ENCODE measurements at regions of chr11 and their contacts with region 1.

Region 1: GRCh38 chr11:33399421-33399820 is 142.2 kb downstream of the HIPK3 start:
- DNase-seq: no peak
- H3K4me3 ChIP-seq: no peak overlapping the region
- H3K27ac ChIP-seq: no peak overlapping the region
- H3K4me1 ChIP-seq: no peaks in the 10 kb centered on the region
- H3K27me3 ChIP-seq: peaks cover 0 to 5% (median 0%) of the 10 kb centered on the region in 3 donors
- CTCF ChIP-seq: no peak
- EP300 ChIP-seq: no peak
- POLR2A ChIP-seq: no peak

Region 2: GRCh38 chr11:33435216-33435615 is 35.8 kb after region 1 on chr11:
- intact Hi-C with region 1: no loop called
- DNase-seq: no peak
- H3K4me3 ChIP-seq: no peak overlapping the region
- H3K27ac ChIP-seq: no peak overlapping the region
- H3K4me1 ChIP-seq: no peaks in the 10 kb centered on the region
- H3K27me3 ChIP-seq: no peaks in the 10 kb centered on the region
- CTCF ChIP-seq: no peak
- EP300 ChIP-seq: no peak
- POLR2A ChIP-seq: no peak

Region 3: DNA sequence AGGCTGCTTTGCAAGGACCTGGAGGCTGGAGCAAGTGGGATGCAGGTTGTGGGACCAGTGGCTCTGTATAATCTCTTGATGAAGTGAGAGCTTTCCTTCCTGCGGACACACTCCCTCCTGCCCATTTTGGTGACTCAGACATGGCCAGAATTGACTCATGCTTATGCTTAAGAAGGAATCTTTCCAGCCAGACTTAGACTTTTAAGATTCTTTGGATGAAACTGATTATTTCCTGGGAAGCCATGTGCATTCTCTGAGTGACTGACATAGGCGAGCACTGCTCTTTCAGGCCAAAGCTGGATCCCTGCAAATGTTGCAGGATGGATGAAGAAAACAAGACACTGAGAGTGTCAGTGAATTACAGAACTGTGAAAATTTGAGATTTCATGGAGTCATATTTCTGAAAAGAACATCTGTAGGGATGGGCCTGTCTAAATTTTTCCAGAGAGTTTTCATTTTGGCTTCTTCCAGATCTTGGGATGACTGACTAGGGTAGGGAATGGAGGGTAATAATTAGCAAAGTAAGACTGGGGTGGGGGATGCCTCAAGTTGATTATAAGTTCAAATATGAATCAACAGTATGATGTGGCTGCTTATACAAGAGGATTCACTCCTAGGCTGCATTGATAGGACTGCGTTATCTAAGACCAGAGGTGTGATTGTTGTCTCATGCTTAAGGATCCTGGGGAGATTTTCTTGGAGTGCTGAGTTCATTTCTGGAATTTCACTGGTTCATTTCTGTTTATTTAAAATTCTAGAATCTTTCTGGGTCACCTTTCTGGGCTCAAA is 53.6 kb after region 1 on chr11:
- intact Hi-C with region 1: loop called (anchors 2 kb)
- DNase-seq: no peak
- H3K4me3 ChIP-seq: no peak overlapping the region
- H3K27ac ChIP-seq: no peak overlapping the region
- H3K4me1 ChIP-seq: no peaks in the 10 kb centered on the region
- H3K27me3 ChIP-seq: no peaks in the 10 kb centered on the region
- CTCF ChIP-seq: no peak
- EP300 ChIP-seq: no peak
- POLR2A ChIP-seq: no peak

Region 4: GRCh38 chr11:33716236-33716635 is 316.8 kb after region 1 on chr11:
- intact Hi-C with region 1: no loop called
- DNase-seq: no peak
- H3K4me3 ChIP-seq: no peak overlapping the region
- H3K27ac ChIP-seq: peak overlapping the region in 1 of 4 donors; percentile 55
- H3K4me1 ChIP-seq: peaks cover 0 to 16% (median 10%) of the 10 kb centered on the region in 4 donors
- H3K27me3 ChIP-seq: no peaks in the 10 kb centered on the region
- CTCF ChIP-seq: no peak
- EP300 ChIP-seq: no peak
- POLR2A ChIP-seq: no peak